ENCODE measurements at regions of chr2 and their contacts with region 1.

Region 1: DNA sequence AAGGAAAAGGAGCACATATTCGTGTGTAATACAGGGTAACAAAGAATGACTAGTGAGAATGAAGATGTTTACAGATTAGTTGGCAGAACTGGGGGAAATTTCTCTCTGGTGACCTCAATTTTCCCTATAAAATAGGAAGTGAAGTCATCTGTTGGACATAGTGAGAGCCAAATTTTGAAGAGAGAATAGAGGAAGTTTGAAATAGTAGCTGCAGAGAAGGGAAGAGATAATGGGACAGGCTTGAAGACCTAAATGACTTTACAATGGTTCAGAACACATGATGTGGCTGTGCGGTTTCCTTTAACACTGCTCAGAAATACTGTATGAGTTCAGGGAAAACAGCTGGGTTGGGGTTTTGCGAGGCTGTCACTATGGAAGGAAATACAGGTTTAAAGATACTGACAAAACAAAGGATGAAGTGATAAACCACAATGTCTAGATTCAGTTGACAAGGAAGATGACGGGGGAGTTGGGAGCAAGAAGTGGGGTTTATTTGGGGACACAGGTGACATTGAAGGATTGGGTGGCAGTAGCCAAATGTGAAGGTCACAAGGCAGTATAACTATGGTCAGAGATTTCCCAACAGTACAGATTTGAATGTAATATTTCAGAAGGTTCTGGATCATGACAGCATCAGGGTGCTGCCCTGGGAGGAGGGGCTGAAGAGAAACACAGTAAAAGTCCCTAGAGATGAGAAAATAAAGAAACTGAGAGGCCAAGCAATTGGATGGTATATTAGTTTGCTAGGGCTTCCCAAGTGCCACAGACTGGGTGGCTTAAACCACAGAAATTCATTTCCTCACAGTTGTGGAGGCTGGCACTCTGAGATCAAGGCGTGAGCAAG is 82.6 kb upstream of the TANK start:
- DNase-seq: peak; percentile 10 to 84 (median 73)
- ATAC-seq: peak; percentile 90
- H3K4me3 ChIP-seq: peak overlapping the region; percentile 5
- H3K4me3 Mint-ChIP-seq: peak overlapping the region; percentile 1 to 76 (median 62)
- H3K27ac ChIP-seq: peak overlapping the region; percentile 40
- H3K27ac Mint-ChIP-seq: peak overlapping the region; percentile 60 to 94 (median 88)
- H3K4me1 ChIP-seq: peaks cover 23 to 25% of the 10 kb centered on the region in 2 donors
- H3K4me1 Mint-ChIP-seq: peaks cover 24 to 60% (median 29%) of the 10 kb centered on the region in 7 donors
- H3K27me3 ChIP-seq: no peaks in the 10 kb centered on the region
- H3K27me3 Mint-ChIP-seq: no peaks in the 10 kb centered on the region

Region 2: DNA sequence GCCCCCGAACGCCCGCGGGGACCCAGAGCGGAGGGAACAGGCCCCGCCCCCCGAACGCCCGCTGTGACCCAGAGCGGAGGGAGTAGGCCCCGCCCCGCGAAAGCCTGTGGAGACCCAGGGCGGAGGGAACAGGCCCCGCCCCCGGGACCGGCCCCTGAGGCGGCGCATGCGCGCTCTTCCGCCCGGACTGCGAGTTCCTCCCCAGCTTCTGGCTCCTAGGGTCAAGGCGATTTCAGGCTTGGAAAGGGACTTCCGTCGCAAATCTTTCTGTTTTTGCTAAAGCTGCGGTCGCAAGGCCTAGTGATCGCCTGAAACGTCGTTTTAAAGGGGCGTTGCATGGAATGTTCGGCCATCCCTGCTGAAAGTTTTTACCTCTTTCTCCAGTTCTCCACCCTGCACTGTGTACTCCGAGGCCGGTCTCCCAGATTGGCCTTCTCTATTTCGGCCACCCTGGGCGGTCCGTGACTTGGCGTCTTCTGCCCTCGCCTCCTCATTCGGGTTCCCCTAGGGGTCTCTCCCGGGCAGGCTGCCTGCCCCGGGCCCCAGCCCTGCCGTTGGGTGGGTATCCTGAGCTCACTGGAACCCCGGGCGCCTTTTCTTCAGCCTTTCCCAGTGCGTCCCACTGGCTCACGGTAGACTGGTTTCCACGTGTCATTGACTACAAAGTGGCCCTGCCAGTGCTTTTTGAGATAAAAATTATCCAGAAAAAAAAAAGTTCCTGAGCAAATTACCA is 1790.7 kb before region 1 on chr2:
- CTCF ChIA-PET with region 1: no interaction called
- POLR2A ChIA-PET with region 1: no interaction called
- intact Hi-C with region 1: loop called in 1 of 2 experiments (anchors 5 kb)
- DNase-seq: peak; percentile 89 to 97 (median 94)
- ATAC-seq: peak; percentile 99
- H3K4me3 ChIP-seq: peak overlapping the region; percentile 72
- H3K4me3 Mint-ChIP-seq: peak overlapping the region; percentile 80 to 92 (median 89)
- H3K27ac ChIP-seq: peak overlapping the region; percentile 77
- H3K27ac Mint-ChIP-seq: peak overlapping the region; percentile 64 to 97 (median 85)
- H3K4me1 ChIP-seq: peaks cover 8 to 13% of the 10 kb centered on the region in 2 donors
- H3K4me1 Mint-ChIP-seq: peaks cover 15 to 36% (median 31%) of the 10 kb centered on the region in 7 donors
- H3K27me3 ChIP-seq: no peaks in the 10 kb centered on the region
- H3K27me3 Mint-ChIP-seq: no peaks in the 10 kb centered on the region

Region 3: GRCh38 chr2:160918906-160919503 is 158.6 kb before region 1 on chr2:
- CTCF ChIA-PET with region 1: no interaction called
- POLR2A ChIA-PET with region 1: no interaction called
- intact Hi-C with region 1: no loop called
- DNase-seq: peak in 7 of 9 donors; percentile 3 to 28 (median 10)
- ATAC-seq: peak; percentile 47
- H3K4me3 ChIP-seq: no peak overlapping the region
- H3K4me3 Mint-ChIP-seq: no peak overlapping the region
- H3K27ac ChIP-seq: no peak overlapping the region
- H3K27ac Mint-ChIP-seq: peak overlapping the region in 1 of 9 donors; percentile 6
- H3K4me1 ChIP-seq: no peaks in the 10 kb centered on the region
- H3K4me1 Mint-ChIP-seq: no peaks in the 10 kb centered on the region
- H3K27me3 ChIP-seq: no peaks in the 10 kb centered on the region
- H3K27me3 Mint-ChIP-seq: peaks cover 0 to 7% (median 0%) of the 10 kb centered on the region in 5 donors

Region 4: DNA sequence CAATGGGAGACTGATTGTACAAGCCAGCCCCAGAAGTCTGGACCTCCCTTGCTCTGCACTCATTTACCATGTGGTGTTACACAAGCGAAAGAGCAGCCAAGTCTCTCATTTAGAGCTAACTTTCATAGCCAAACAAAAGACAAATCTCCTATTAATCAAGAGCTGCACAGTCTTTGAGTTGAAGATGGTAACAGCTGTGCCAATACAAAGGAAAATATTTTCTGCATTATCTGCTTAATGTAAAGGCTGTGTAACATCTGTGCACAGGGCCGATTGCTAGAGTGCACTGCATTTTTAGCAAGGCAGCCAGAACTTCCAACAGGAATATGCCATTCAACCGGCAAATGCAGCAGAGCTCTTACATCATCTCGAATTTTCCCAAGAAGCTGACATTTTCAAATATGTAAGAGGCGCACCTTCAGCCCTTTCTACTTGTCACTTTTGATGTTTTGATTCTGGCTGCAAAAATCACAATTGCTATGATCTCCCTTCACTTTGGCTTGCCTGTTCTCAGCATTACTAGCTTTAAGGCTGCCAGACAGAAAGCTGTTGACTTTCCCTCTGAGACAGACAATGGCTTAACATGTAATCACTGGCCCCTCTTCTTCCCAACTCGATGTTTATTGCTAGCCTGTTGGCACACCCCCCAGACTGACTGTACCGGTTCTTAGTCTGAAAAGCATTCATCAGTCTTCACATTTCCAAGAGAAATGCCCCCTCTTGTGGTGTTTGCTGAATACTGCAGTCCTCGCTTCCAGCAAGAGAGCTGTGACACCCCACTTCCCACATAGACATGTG is 14.2 kb before region 1 on chr2:
- CTCF ChIA-PET with region 1: interaction called, 5 read pairs
- POLR2A ChIA-PET with region 1: interaction called, 6 read pairs
- intact Hi-C with region 1: loop called (anchors 1 kb)
- DNase-seq: peak; percentile 17 to 70 (median 62)
- ATAC-seq: peak; percentile 94
- H3K4me3 ChIP-seq: no peak overlapping the region
- H3K4me3 Mint-ChIP-seq: no peak overlapping the region
- H3K27ac ChIP-seq: no peak overlapping the region
- H3K27ac Mint-ChIP-seq: peak overlapping the region in 3 of 9 donors; percentile 18 to 65 (median 53)
- H3K4me1 ChIP-seq: no peaks in the 10 kb centered on the region
- H3K4me1 Mint-ChIP-seq: peaks cover 2 to 12% (median 5%) of the 10 kb centered on the region in 7 donors
- H3K27me3 ChIP-seq: no peaks in the 10 kb centered on the region
- H3K27me3 Mint-ChIP-seq: peaks cover 0 to 5% (median 0%) of the 10 kb centered on the region in 5 donors

Region 5: DNA sequence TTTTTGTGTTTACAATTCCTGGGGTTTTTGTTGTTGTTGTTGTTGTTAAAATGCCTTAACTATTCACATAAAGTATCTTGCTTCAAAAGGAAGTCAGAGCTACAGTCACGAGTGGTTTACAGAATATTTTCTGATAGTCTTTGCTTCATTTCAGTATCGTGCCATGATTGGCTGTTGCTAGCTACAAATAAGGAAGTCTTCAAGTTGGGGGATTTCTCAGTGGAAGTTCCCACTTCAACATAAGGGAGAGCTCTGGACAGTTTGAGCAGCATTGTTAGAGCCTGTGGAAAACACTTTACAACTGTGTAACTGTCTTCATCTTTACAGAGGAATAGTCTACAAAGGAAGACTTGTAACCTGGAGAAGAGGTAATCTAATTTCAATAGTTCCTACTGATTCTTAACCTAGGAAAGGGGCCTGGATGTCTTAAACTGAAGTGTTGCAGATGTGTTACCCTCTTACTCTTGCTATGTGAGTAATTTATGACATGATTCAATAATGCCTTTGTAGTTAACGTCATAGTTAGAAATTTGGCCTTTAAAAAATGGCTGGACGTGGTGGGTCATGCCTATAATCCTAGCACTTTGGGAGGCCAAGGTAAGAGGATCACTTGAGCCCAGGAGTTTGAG is 59.2 kb after region 1 on chr2:
- CTCF ChIA-PET with region 1: no interaction called
- POLR2A ChIA-PET with region 1: no interaction called
- intact Hi-C with region 1: loop called in 1 of 2 experiments (anchors 1 kb)
- DNase-seq: peak in 6 of 9 donors; percentile 31 to 76 (median 48)
- ATAC-seq: peak; percentile 94
- H3K4me3 ChIP-seq: peak overlapping the region; percentile 67
- H3K4me3 Mint-ChIP-seq: peak overlapping the region; percentile 68 to 98 (median 91)
- H3K27ac ChIP-seq: peak overlapping the region; percentile 83
- H3K27ac Mint-ChIP-seq: peak overlapping the region; percentile 89 to 99 (median 95)
- H3K4me1 ChIP-seq: peaks cover 21 to 27% of the 10 kb centered on the region in 2 donors
- H3K4me1 Mint-ChIP-seq: peaks cover 23 to 71% (median 58%) of the 10 kb centered on the region in 7 donors
- H3K27me3 ChIP-seq: no peaks in the 10 kb centered on the region
- H3K27me3 Mint-ChIP-seq: no peaks in the 10 kb centered on the region

Region 6: DNA sequence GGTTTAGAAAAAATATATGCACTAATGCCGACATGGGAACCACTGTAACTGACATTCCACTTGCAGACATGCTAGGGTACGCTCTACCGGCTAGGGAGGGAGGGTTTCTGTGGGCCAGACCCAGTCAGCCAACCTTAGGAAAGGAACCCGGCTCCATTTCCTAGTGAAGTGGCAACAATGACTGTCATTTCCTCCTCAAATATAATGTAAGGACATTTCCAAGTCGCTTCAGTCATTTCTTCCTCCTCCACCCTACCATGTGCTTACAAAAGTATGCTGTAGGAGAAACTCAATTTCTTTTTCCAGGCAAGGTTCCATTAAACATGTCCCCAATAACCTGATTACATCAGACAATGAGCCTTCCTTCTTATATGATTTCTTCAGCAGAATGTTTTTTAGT is 166.3 kb after region 1 on chr2:
- CTCF ChIA-PET with region 1: no interaction called
- POLR2A ChIA-PET with region 1: no interaction called
- intact Hi-C with region 1: loop called in 1 of 2 experiments (anchors 2 kb)
- DNase-seq: peak in 3 of 9 donors; percentile 18 to 22 (median 18)
- ATAC-seq: no peak
- H3K4me3 ChIP-seq: peak overlapping the region; percentile 61
- H3K4me3 Mint-ChIP-seq: peak overlapping the region; percentile 82 to 98 (median 92)
- H3K27ac ChIP-seq: peak overlapping the region; percentile 83
- H3K27ac Mint-ChIP-seq: peak overlapping the region; percentile 88 to 96 (median 94)
- H3K4me1 ChIP-seq: peaks cover 15 to 25% of the 10 kb centered on the region in 2 donors
- H3K4me1 Mint-ChIP-seq: peaks cover 15 to 73% (median 65%) of the 10 kb centered on the region in 7 donors
- H3K27me3 ChIP-seq: no peaks in the 10 kb centered on the region
- H3K27me3 Mint-ChIP-seq: no peaks in the 10 kb centered on the region

Region 7: GRCh38 chr2:161992526-161992925 is 914.9 kb after region 1 on chr2:
- CTCF ChIA-PET with region 1: no interaction called
- POLR2A ChIA-PET with region 1: no interaction called
- intact Hi-C with region 1: loop called in 1 of 2 experiments (anchors 5 kb)
- DNase-seq: peak in 8 of 9 donors; percentile 52 to 78 (median 72)
- ATAC-seq: peak; percentile 86
- H3K4me3 ChIP-seq: peak overlapping the region; percentile 46
- H3K4me3 Mint-ChIP-seq: peak overlapping the region; percentile 80 to 91 (median 86)
- H3K27ac ChIP-seq: peak overlapping the region; percentile 68
- H3K27ac Mint-ChIP-seq: peak overlapping the region; percentile 91 to 100 (median 97)
- H3K4me1 ChIP-seq: peaks cover 26 to 51% of the 10 kb centered on the region in 2 donors
- H3K4me1 Mint-ChIP-seq: peaks cover 35 to 78% (median 66%) of the 10 kb centered on the region in 7 donors
- H3K27me3 ChIP-seq: no peaks in the 10 kb centered on the region
- H3K27me3 Mint-ChIP-seq: no peaks in the 10 kb centered on the region

Region 8: DNA sequence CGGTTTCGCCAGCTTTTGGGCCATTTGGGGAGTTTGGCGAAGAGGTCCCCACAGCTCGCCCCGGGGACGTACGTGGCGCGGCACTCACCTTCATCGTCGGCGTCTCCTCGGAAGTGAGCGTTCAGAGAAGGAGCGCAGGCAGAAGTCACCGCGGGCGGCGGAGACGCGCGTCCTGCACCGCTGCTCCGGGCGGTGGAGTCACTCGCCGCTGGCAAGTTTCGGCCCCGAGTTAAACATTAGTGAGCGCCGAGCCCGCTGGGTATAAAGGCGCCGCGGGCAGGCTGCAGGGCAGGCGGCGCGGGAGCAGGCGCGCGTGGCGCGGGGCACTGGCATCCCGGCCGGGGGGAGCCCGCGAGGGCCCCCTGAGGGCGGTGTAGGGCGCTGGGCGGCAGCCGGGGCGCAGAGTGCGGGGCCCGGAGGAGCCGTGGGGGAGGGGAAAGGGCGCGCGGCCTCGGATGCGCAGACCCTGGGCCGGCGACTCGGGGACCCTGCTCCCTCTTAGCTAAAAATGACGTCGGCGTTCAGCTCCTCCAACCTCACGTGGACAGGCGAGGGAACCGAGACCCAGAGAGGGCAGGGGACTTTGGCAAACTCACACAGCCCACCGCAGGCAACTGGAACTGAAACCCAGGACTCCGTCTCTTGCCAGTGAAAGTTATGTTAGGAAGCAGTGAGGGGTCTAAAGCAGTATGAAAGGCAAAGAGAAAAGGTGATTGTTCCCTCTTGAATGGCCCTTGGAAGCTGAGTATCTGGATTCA is 996.5 kb after region 1 on chr2 and contains the start of gene DPP4:
- CTCF ChIA-PET with region 1: no interaction called
- POLR2A ChIA-PET with region 1: no interaction called
- intact Hi-C with region 1: loop called in 1 of 2 experiments (anchors 5 kb)
- DNase-seq: peak; percentile 31 to 68 (median 61)
- ATAC-seq: peak; percentile 88
- H3K4me3 ChIP-seq: peak within 1 kb of the TSS; percentile 95
- H3K4me3 Mint-ChIP-seq: peak within 1 kb of the TSS; percentile 92 to 100 (median 98)
- H3K27ac ChIP-seq: peak within 1 kb of the TSS; percentile 84
- H3K27ac Mint-ChIP-seq: peak within 1 kb of the TSS; percentile 86 to 98 (median 94)
- H3K4me1 ChIP-seq: peaks cover 0 to 28% of the 10 kb centered on the region in 2 donors
- H3K4me1 Mint-ChIP-seq: peaks cover 30 to 60% (median 52%) of the 10 kb centered on the region in 7 donors
- H3K27me3 ChIP-seq: no peaks in the 10 kb centered on the region
- H3K27me3 Mint-ChIP-seq: peaks cover 0 to 5% (median 0%) of the 10 kb centered on the region in 5 donors
- total RNA-seq, gene DPP4: 35.7 to 188 (median 41.6) TPM